PC-9 (cell line): ENCODE measurements at regions of chr12 and their contacts with region 1.

Region 1: GRCh38 chr12:54191550-54192022 is 2.8 kb upstream of the SMUG1 start:
- DNase-seq: peak; percentile 60 to 74
- H3K4me3 ChIP-seq: no peak overlapping the region
- H3K27ac ChIP-seq: no peak overlapping the region
- H3K4me1 ChIP-seq: peaks cover 34% of the 10 kb centered on the region
- H3K27me3 ChIP-seq: peaks cover 13% of the 10 kb centered on the region; the same call in 1 of the 2 replicates
- CTCF ChIP-seq: peak; percentile 77

Region 2: DNA sequence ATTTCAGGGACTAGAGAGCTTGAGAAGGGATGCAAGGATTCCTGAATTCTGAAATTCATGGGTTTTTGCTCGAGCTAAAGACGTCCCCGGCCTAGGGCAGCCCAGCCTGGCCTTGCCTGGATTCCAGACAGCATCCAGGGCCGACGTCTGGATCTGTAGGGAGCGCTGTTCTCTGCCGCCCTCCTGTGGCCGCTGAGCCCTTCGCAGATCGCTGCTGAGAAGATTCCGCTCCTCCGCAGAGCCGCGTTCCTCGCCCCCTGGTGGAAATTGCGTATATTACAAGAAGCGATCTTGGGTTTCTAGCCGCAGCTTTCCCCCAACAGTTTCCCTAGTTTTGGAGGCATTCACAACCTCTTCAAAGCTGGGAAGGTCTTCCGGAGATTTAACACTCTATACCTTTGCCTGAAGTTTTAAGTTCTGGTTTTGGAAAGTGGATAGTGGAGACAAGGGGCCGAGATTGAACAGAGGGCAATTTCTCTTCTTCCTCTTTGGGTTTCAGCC is 444.9 kb before region 1 on chr12:
- CTCF ChIA-PET with region 1: no interaction called
- POLR2A ChIA-PET with region 1: no interaction called
- intact Hi-C with region 1: loop called (anchors 5 kb)
- DNase-seq: peak; percentile 74 to 89
- H3K4me3 ChIP-seq: no peak overlapping the region
- H3K27ac ChIP-seq: no peak overlapping the region
- H3K4me1 ChIP-seq: no peaks in the 10 kb centered on the region
- H3K27me3 ChIP-seq: 0 out of 2 replicates have a peak, but pooled peaks cover 4% of the 10 kb centered on the region
- CTCF ChIP-seq: peak; percentile 99

Region 3: DNA sequence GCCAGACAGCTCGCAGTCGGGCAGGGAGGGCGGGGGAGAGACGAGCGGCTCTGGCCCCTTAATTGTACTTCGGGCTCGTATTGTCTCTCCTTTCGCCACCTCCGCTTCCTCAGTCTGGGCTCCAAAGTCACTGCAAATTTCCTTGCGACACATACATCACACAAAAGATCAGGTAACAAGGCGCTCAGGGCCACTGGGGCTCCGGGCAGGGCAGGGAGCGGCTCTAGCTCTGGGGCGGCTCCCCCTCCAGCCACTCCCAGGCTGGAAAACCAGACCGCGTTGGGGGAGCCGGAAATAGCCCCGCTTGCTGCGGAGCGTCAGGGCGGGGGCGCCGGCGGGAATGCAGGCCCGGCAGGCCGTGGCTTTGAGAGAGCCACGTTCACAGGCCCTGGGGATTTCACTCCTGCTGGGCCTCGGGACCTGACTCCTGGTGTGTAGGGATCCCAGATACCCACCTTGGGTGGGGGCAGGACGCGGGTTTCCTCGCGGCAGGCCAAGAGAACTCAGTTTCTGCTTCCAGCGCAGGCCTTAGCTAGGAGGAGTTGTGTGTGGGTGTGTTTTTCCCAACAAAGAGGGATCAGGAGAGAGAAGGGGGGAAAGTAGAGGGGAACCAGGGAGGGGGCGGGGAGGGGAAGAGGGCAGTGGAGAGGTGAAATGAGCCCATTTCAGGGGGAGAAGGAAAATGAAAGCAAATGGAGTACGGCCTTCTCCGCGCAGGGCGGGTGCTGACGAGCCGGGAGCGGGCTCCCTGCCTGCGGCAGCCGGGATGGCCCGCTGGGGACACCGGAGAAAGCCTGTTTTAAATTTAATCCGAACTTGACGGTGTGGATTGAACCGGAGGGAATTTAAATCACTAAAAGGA is 196.0 kb before region 1 on chr12:
- CTCF ChIA-PET with region 1: no interaction called
- POLR2A ChIA-PET with region 1: interaction called, 13 read pairs
- intact Hi-C with region 1: no loop called
- DNase-seq: peak; percentile 91
- H3K4me3 ChIP-seq: peak overlapping the region; percentile 86
- H3K27ac ChIP-seq: peak overlapping the region; percentile 89
- H3K4me1 ChIP-seq: peaks cover 19% of the 10 kb centered on the region; the same call in 1 of the 2 replicates
- H3K27me3 ChIP-seq: no peaks in the 10 kb centered on the region
- CTCF ChIP-seq: no peak

Region 4: GRCh38 chr12:54017878-54018467 is 173.6 kb before region 1 on chr12:
- CTCF ChIA-PET with region 1: interaction called, 37 read pairs
- POLR2A ChIA-PET with region 1: interaction called, 31 read pairs
- intact Hi-C with region 1: no loop called
- DNase-seq: peak; percentile 54 to 86
- H3K4me3 ChIP-seq: peak overlapping the region; percentile 82
- H3K27ac ChIP-seq: peak overlapping the region; percentile 7; the same call in 1 of the 2 replicates
- H3K4me1 ChIP-seq: no peaks in the 10 kb centered on the region; the same call in 1 of the 2 replicates
- H3K27me3 ChIP-seq: no peaks in the 10 kb centered on the region
- CTCF ChIP-seq: no peak

Region 5: GRCh38 chr12:54159140-54159539 is 32.4 kb before region 1 on chr12:
- CTCF ChIA-PET with region 1: no interaction called
- POLR2A ChIA-PET with region 1: no interaction called
- intact Hi-C with region 1: no loop called
- DNase-seq: no peak
- H3K4me3 ChIP-seq: no peak overlapping the region
- H3K27ac ChIP-seq: no peak overlapping the region
- H3K4me1 ChIP-seq: no peaks in the 10 kb centered on the region
- H3K27me3 ChIP-seq: peaks cover 7% of the 10 kb centered on the region; the same call in 1 of the 2 replicates
- CTCF ChIP-seq: no peak; the same call in 1 of the 2 replicates

Region 6: DNA sequence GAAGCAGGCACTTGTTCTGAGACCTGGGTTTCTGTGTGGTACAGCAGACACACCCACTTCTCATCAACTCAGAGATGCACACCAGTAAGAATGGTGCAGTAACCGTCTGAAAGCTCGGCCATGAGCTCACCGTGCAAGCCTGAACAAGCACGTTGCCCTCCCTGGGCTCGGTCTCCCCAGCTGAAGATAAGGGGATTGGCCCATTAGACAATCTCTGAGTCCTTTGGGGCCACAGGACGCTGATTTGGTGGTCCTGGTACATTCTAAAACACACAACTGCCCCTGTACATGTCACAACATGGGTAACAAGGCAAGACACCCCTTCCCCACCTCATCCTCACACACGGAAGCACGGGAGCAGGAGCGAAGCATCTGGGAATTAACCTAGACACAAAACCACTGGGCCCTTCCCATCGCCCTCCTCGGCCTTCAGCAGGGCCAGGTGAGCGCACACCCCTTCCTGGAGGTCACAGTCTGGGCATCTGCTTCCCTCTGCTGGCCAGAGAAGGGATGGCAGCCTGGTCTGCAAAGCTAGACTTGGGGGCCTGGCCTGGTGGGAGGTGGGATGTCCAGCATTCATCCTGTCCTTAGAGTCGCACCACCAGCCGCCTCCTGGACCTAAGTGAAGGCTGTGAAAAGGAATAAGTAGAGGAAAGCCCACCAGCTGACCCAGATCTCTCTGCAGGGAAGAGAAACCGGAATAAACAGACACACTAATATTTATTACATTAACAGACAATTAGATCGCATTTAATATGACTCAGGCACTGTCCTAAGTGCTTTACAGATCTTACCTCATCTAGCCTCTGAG is 16.1 kb after region 1 on chr12:
- CTCF ChIA-PET with region 1: interaction called, 10 read pairs
- POLR2A ChIA-PET with region 1: no interaction called
- intact Hi-C with region 1: no loop called
- DNase-seq: peak; percentile 62 to 82
- H3K4me3 ChIP-seq: no peak overlapping the region
- H3K27ac ChIP-seq: no peak overlapping the region
- H3K4me1 ChIP-seq: no peaks in the 10 kb centered on the region
- H3K27me3 ChIP-seq: no peaks in the 10 kb centered on the region
- CTCF ChIP-seq: peak; percentile 96

Region 7: DNA sequence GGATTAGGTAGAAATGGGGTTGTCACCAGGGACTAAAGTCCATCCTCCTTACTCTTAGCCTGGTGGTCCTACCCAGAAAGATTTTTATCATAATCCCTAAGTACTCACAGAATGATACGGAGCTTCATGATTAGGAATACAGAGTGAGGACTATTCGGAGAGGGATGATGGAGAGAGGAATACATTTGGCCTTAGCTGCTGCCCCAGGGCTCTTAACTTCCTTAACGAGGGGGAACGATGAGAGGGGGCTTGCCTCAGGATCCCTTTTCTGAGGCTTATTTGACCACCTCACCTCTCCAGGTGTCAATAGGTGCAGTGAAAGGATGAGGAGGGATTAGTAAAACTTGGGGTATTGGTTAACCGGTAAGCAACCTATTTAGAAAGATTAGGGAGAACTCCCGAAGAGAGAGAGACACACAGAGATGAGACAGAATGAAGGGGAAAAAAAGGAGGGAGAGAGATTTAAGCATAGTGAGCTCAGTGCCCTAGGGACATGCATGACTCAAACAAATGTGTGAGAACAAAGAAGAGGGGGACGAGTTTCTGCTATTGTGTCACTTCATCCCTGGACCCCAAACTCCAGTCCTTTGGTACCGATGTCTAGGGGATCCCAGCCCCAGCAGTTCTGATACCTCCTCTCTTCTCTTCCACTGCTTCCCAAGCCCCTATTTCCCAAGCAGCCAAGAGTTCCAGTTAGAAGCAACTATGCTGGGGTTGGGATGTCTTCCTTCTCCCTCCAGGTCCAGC is 108.1 kb after region 1 on chr12:
- CTCF ChIA-PET with region 1: no interaction called
- POLR2A ChIA-PET with region 1: no interaction called
- intact Hi-C with region 1: no loop called
- DNase-seq: no peak
- H3K4me3 ChIP-seq: no peak overlapping the region
- H3K27ac ChIP-seq: no peak overlapping the region
- H3K4me1 ChIP-seq: peaks cover 45% of the 10 kb centered on the region
- H3K27me3 ChIP-seq: no peaks in the 10 kb centered on the region
- CTCF ChIP-seq: no peak